Endothelial cell of umbilical vein (primary cell): ENCODE measurements at regions of chr2 and their contacts with region 1.

Region 1: GRCh38 chr2:146821836-146822316 is 1023.0 kb upstream of the ACVR2A start:
- DNase-seq: peak; percentile 85
- H3K4me3 ChIP-seq: no peak overlapping the region
- H3K27ac ChIP-seq: peak overlapping the region; percentile 80
- H3K4me1 ChIP-seq: peaks cover 36% of the 10 kb centered on the region
- H3K27me3 ChIP-seq: no peaks in the 10 kb centered on the region
- CTCF ChIP-seq: peak; percentile 22 to 24
- POLR2A ChIP-seq: no peak

Region 2: GRCh38 chr2:146777181-146777580 is 44.7 kb before region 1 on chr2:
- CTCF ChIA-PET with region 1: no interaction called
- POLR2A ChIA-PET with region 1: no interaction called
- dilution Hi-C with region 1: no loop called
- intact Hi-C with region 1: no loop called
- DNase-seq: no peak
- H3K4me3 ChIP-seq: no peak overlapping the region
- H3K27ac ChIP-seq: no peak overlapping the region
- H3K4me1 ChIP-seq: no peaks in the 10 kb centered on the region
- H3K27me3 ChIP-seq: no peaks in the 10 kb centered on the region
- CTCF ChIP-seq: no peak
- POLR2A ChIP-seq: no peak

Region 3: GRCh38 chr2:146801886-146802285 is 20.0 kb before region 1 on chr2:
- CTCF ChIA-PET with region 1: no interaction called
- POLR2A ChIA-PET with region 1: no interaction called
- dilution Hi-C with region 1: no loop called
- intact Hi-C with region 1: no loop called
- DNase-seq: no peak
- H3K4me3 ChIP-seq: no peak overlapping the region
- H3K27ac ChIP-seq: no peak overlapping the region
- H3K4me1 ChIP-seq: no peaks in the 10 kb centered on the region
- H3K27me3 ChIP-seq: no peaks in the 10 kb centered on the region
- CTCF ChIP-seq: no peak
- POLR2A ChIP-seq: no peak

Region 4: GRCh38 chr2:146874260-146874658 is 52.4 kb after region 1 on chr2:
- CTCF ChIA-PET with region 1: interaction called, 4 read pairs
- POLR2A ChIA-PET with region 1: no interaction called
- dilution Hi-C with region 1: no loop called
- intact Hi-C with region 1: loop called (anchors 1 kb)
- DNase-seq: peak; percentile 98
- H3K4me3 ChIP-seq: peak overlapping the region in 1 of 3 experiments; percentile 29
- H3K27ac ChIP-seq: peak overlapping the region; percentile 90
- H3K4me1 ChIP-seq: peaks cover 34% of the 10 kb centered on the region
- H3K27me3 ChIP-seq: no peaks in the 10 kb centered on the region
- CTCF ChIP-seq: no peak
- POLR2A ChIP-seq: peak; percentile 16

Region 5: GRCh38 chr2:146927080-146927711 is 105.3 kb after region 1 on chr2:
- CTCF ChIA-PET with region 1: interaction called, 10 read pairs
- POLR2A ChIA-PET with region 1: no interaction called
- dilution Hi-C with region 1: no loop called
- intact Hi-C with region 1: loop called (anchors 5 kb)
- DNase-seq: peak; percentile 59
- H3K4me3 ChIP-seq: no peak overlapping the region
- H3K27ac ChIP-seq: no peak overlapping the region
- H3K4me1 ChIP-seq: no peaks in the 10 kb centered on the region
- H3K27me3 ChIP-seq: no peaks in the 10 kb centered on the region
- CTCF ChIP-seq: peak; percentile 32 to 62
- POLR2A ChIP-seq: no peak

Region 6: DNA sequence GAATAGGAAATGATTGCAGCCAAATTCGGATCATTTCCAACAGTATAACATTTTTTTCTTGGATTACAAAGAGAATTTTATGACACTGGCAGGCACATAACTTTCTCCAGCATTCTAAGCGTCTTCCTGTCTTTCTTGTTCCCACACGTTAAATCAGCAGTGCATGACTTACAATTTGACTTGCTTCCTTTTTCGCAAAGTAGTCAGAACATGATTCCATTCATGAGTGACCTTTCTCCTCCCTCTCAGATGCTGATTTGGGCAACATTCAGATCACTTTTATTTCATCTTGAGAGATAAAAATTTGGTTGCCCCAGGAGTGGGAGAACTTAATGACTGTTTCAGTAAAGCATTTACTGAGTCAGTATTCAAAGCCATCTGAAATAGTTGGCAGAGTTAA is 164.3 kb after region 1 on chr2:
- CTCF ChIA-PET with region 1: no interaction called
- POLR2A ChIA-PET with region 1: no interaction called
- dilution Hi-C with region 1: no loop called
- intact Hi-C with region 1: loop called (anchors 5 kb)
- DNase-seq: peak; percentile 80
- H3K4me3 ChIP-seq: no peak overlapping the region
- H3K27ac ChIP-seq: no peak overlapping the region
- H3K4me1 ChIP-seq: peaks cover 6% of the 10 kb centered on the region
- H3K27me3 ChIP-seq: no peaks in the 10 kb centered on the region
- CTCF ChIP-seq: no peak
- POLR2A ChIP-seq: no peak

Region 7: GRCh38 chr2:147045113-147045512 is 223.2 kb after region 1 on chr2:
- CTCF ChIA-PET with region 1: interaction called, 4 read pairs
- POLR2A ChIA-PET with region 1: no interaction called
- dilution Hi-C with region 1: no loop called
- intact Hi-C with region 1: loop called (anchors 5 kb)
- DNase-seq: peak; percentile 47
- H3K4me3 ChIP-seq: no peak overlapping the region
- H3K27ac ChIP-seq: no peak overlapping the region
- H3K4me1 ChIP-seq: no peaks in the 10 kb centered on the region
- H3K27me3 ChIP-seq: no peaks in the 10 kb centered on the region
- CTCF ChIP-seq: peak; percentile 62 to 69
- POLR2A ChIP-seq: no peak

Region 8: DNA sequence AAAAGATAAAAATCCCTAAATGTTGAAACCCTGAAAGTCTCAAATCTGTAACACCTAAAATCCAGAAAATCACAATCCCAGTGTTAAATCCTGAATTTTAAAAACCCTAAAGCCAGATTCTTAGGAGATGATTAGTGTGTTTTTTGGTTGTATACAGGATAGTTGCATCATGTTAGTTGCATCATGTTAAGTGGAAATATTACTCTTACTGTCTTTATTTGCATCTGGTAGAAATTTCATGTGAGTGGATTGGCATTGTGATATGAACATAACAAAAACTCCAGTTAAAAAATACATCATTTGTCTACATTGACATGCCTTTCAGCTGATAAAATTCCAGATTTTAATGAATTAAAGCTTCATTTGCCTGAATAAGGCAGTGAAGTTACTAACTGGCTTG is 339.9 kb after region 1 on chr2:
- CTCF ChIA-PET with region 1: no interaction called
- POLR2A ChIA-PET with region 1: no interaction called
- dilution Hi-C with region 1: no loop called
- intact Hi-C with region 1: no loop called
- DNase-seq: no peak
- H3K4me3 ChIP-seq: no peak overlapping the region
- H3K27ac ChIP-seq: no peak overlapping the region
- H3K4me1 ChIP-seq: no peaks in the 10 kb centered on the region
- H3K27me3 ChIP-seq: no peaks in the 10 kb centered on the region
- CTCF ChIP-seq: no peak
- POLR2A ChIP-seq: no peak